Panc1 (cell line): ENCODE measurements at regions of chr5 and their contacts with region 1.

Region 1: DNA sequence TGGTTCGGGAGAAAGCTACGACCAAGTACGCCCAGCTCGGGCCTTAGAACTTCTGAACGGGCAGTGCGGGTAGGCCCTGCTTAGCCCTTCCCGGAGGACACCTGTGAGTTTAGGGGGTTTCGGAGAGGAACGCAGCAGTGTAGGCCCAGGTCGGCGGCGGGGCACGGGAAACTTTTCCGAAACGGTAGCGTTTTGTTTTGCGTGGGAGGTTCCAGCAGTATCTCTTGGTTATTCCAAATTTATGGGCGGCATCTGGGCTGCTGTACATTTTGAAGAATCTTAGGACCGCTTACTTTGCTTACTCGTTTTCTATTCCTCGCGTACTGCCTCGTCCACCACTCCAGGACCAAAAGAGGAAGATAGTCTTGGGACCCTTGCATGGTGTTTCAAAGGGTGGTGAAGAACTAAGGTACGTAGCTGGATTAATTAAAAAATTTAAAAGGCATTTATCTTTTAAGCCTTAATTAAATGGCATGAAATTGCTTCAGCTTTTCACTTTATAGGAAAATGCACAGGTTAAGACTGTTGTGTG is 492 bp downstream of the TENT2 start:
- DNase-seq: no peak
- ATAC-seq: peak; percentile 20; the same call in 1 of the 2 replicates
- H3K4me3 ChIP-seq: peak overlapping the region; percentile 90 to 94
- H3K27ac ChIP-seq: peak overlapping the region; percentile 99
- H3K4me1 ChIP-seq: peaks cover 14% of the 10 kb centered on the region; the same call in 1 of the 2 replicates
- H3K27me3 ChIP-seq: no peaks in the 10 kb centered on the region
- CTCF ChIP-seq: no peak

Region 2: DNA sequence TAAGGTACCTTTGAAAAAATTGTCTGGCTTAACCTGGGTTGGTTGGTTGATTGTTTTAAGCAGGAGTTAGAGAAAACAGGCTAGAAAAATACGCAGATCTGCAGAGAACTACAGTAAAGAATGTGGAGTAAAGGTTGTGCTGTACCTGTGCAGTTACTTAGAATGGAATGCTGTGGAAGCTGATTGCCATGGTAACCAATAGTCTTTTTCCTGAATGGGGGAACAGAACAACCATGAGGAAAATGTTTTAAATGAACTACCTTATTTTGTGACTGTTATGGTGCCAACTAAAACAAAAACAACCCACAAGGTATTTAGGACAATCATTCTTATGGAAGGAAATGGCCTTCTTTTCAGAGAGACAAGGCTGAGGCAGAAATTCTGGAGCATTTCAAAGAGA is 94.0 kb before region 1 on chr5:
- CTCF ChIA-PET with region 1: no interaction called
- POLR2A ChIA-PET with region 1: interaction called, 16 read pairs
- in situ Hi-C with region 1: no loop called
- intact Hi-C with region 1: no loop called
- DNase-seq: no peak
- ATAC-seq: no peak
- H3K4me3 ChIP-seq: no peak overlapping the region
- H3K27ac ChIP-seq: no peak overlapping the region
- H3K4me1 ChIP-seq: peaks cover 5% of the 10 kb centered on the region; the same call in 1 of the 2 replicates
- H3K27me3 ChIP-seq: no peaks in the 10 kb centered on the region
- CTCF ChIP-seq: no peak

Region 3: DNA sequence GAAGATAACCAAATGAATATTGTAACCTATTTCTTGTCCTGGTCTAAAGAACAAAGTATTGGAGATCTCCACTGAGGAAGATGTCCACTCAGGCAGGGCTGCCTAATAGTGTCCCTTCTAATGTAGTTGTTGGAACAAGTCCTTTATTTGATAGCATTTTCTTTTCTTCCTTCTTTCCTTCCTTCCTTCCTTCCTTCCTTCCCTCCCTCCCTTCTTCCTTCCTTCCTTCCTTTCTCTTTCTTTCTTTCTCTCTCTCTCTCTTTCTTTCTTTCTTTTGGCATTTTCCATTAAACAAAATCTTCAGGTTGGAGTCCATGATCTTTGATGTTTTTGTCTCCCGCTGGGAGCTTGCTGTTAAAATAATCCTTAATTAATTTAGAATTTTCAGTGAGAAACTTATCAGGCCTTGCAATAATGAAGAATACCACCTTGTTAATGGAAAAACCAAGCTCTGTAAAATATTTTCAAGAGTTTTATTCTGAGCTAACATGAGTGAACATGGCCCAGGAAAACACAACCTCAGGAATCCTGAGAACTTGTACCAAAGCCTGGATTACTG is 44.0 kb before region 1 on chr5:
- CTCF ChIA-PET with region 1: no interaction called
- POLR2A ChIA-PET with region 1: interaction called, 14 read pairs
- in situ Hi-C with region 1: no loop called
- intact Hi-C with region 1: no loop called
- DNase-seq: no peak
- ATAC-seq: no peak
- H3K4me3 ChIP-seq: no peak overlapping the region
- H3K27ac ChIP-seq: no peak overlapping the region
- H3K4me1 ChIP-seq: no peaks in the 10 kb centered on the region
- H3K27me3 ChIP-seq: no peaks in the 10 kb centered on the region
- CTCF ChIP-seq: no peak